ENCODE measurements at regions of chr11 and their contacts with region 1.

Region 1: DNA sequence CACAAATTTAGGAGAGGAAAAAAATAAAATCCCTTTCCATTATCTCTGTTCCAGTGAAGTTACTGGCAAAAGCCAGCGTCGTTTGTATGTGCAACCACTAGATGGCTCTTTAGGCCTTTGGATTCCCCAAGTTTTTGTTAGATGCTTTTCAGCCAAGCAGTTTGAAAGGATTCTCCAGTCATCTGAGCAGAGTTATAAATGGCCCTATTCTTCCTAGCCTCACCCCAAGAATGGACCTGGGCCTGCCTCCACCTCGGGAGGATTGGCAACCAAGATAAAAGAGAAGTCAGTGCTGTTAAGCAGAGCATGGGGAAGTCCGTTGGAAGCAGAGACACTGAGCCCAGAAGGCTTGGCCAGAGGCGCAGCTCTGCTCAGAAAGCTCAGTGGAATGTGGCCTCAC is 15.4 kb downstream of the FAM181B start:
- DNase-seq: no peak
- H3K4me3 ChIP-seq: no peak overlapping the region
- H3K27ac ChIP-seq: no peak overlapping the region
- H3K4me1 ChIP-seq: peaks cover 0 to 36% (median 10%) of the 10 kb centered on the region in 4 donors
- H3K27me3 ChIP-seq: no peaks in the 10 kb centered on the region
- CTCF ChIP-seq: peak; percentile 67 to 82

Region 2: DNA sequence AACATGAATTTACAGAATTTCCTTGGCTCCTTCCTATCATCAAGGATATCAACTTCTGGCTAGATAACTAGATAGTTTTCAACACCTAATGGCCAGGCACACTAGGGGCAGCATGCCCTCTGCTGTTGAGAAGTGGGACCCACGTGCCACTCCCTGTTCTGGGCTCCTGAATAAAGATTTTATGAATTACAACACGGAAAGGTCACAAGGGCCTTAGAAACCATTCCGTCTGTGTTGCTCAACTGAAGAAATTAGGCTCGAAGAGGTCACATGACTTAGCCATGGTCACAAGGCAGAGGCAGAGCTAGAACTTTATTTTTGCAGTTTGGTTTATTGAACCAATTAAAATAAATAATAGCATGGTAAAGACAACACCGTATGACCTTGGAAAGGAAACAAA is 146.0 kb after region 1 on chr11:
- intact Hi-C with region 1: loop called (anchors 2 kb)
- DNase-seq: peak; percentile 81 to 82
- H3K4me3 ChIP-seq: no peak overlapping the region
- H3K27ac ChIP-seq: peak overlapping the region; percentile 4 to 17
- H3K4me1 ChIP-seq: peaks cover 0 to 19% (median 4%) of the 10 kb centered on the region in 4 donors
- H3K27me3 ChIP-seq: no peaks in the 10 kb centered on the region
- CTCF ChIP-seq: peak; percentile 64 to 66

Region 3: GRCh38 chr11:82874646-82875523 is 156.6 kb after region 1 on chr11:
- intact Hi-C with region 1: no loop called
- DNase-seq: no peak
- H3K4me3 ChIP-seq: no peak overlapping the region
- H3K27ac ChIP-seq: no peak overlapping the region
- H3K4me1 ChIP-seq: peaks cover 0 to 3% (median 1%) of the 10 kb centered on the region in 4 donors
- H3K27me3 ChIP-seq: no peaks in the 10 kb centered on the region
- CTCF ChIP-seq: no peak

Region 4: DNA sequence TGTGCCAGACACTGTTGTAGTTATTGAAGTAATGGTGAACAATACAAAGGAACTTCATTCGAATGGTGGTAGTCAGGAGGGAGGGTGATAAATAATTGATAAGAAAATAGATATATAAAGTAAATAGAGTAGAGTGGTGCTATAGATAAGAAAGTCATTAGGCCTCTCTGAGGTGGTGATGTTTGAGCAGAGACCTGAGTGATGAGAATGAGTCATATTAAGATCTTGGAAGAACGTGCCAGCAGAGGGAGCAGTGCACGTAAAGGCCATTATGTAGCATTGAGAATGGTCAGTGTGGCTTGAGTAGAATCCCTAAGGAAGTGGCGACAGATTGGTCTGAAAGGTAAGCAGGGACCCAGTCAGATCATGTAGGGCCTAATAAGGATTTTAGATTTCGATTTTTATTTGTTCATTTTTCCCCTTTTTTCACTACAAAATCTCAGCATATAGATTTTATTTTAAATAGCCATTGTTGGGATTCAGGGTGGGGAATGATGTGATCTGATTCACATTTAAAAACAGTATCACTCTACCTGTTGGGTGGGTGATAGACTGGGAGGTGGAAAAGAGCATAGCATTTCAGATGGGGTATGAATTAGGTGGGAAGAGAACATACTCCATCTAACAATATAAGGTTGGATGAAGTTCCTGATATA is 523.1 kb after region 1 on chr11:
- intact Hi-C with region 1: loop called (anchors 10 kb)
- DNase-seq: peak in 1 of 2 donors; percentile 45
- H3K4me3 ChIP-seq: no peak overlapping the region
- H3K27ac ChIP-seq: no peak overlapping the region
- H3K4me1 ChIP-seq: no peaks in the 10 kb centered on the region
- H3K27me3 ChIP-seq: no peaks in the 10 kb centered on the region
- CTCF ChIP-seq: peak; percentile 39 to 48